ENCODE measurements at regions of chr1 and their contacts with region 1.

Region 1: GRCh38 chr1:156728597-156729462 is at the start of gene ISG20L2:
- DNase-seq: peak; percentile 91 to 93
- H3K4me3 ChIP-seq: peak within 1 kb of the TSS; percentile 83 to 100 (median 94)
- H3K27ac ChIP-seq: peak within 1 kb of the TSS; percentile 89
- H3K4me1 ChIP-seq: peaks cover 0 to 23% (median 18%) of the 10 kb centered on the region in 4 experiments; a peak in 6 of 7 replicates
- H3K27me3 ChIP-seq: no peaks in the 10 kb centered on the region
- CTCF ChIP-seq: no peak
- EP300 ChIP-seq: no peak
- POLR2A ChIP-seq: peak; percentile 91 to 92
- RAD21 ChIP-seq: no peak
- total RNA-seq, gene ISG20L2: 47.5 and 53.1 TPM in 2 replicates

Region 2: DNA sequence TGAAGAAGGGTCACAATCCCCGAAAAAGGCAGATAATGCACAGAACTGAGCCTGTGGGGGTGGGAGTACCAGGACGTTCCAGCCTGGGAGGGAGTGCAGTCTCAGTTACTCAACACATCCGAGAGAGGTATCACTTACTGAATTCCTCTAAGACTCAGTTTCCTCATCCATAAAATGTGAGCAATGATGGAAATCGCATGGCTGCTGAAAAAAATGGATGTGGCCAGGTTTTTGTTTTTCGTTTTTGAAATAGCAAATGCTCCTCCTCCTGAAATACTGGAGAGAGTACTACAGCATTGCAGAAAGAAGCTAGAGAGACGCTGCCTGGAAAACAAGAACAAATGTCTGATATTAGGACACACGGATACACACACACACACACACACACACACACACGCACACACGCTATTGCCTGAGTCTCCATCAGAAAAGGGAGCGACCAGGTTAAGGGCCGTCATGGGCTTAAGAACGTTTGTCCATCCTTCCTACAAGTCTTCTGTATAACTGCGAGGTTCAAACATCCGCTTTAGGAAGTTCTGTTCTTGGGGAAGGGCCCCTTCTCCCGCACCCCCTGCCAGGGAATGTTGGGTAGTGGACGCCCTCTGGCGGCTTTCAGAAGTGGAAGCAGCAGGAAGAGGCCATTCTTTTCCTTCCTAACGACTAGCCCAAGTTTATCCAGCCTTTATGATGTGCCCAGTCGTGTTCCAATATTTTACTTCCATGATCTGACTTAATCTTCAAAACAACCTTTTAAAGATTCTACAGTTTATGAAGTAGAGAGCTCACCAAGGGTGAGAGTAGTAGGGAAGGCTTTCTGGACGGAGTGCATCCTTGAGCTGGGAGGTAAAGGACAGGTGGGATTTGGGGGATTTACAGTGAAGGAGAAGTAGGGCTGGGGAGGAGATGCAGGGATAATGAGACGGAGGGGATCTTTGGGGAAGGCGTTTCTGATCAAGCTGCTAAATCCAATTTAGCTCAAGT is 50.9 kb before region 1 on chr1:
- CTCF ChIA-PET with region 1: interaction called, 4,284 read pairs
- POLR2A ChIA-PET with region 1: interaction called, 57 read pairs
- DNase-seq: peak in 1 of 2 experiments; percentile 74
- H3K4me3 ChIP-seq: peak overlapping the region; percentile 64 to 84 (median 74); a peak in 5 of 8 replicates
- H3K27ac ChIP-seq: no peak overlapping the region
- H3K4me1 ChIP-seq: peaks cover 7 to 37% (median 30%) of the 10 kb centered on the region in 4 experiments
- H3K27me3 ChIP-seq: no peaks in the 10 kb centered on the region; a peak in 2 of 7 replicates
- CTCF ChIP-seq: peak in 2 of 3 experiments; percentile 92 to 97; a peak in 3 of 4 replicates
- EP300 ChIP-seq: no peak
- POLR2A ChIP-seq: no peak
- RAD21 ChIP-seq: peak; percentile 89 to 95

Region 3: GRCh38 chr1:156740679-156741612 is 12.1 kb after region 1 on chr1 and contains the start of gene MRPL24:
- CTCF ChIA-PET with region 1: interaction called, 76 read pairs
- POLR2A ChIA-PET with region 1: interaction called, 214 read pairs
- DNase-seq: peak; percentile 93 to 99
- H3K4me3 ChIP-seq: peak within 1 kb of the TSS; percentile 55 to 95 (median 84)
- H3K27ac ChIP-seq: peak within 1 kb of the TSS; percentile 72
- H3K4me1 ChIP-seq: peaks cover 3 to 16% (median 7%) of the 10 kb centered on the region in 4 experiments; a peak in 6 of 7 replicates
- H3K27me3 ChIP-seq: no peaks in the 10 kb centered on the region
- CTCF ChIP-seq: peak in 1 of 3 experiments; percentile 12; a peak in 1 of 4 replicates
- EP300 ChIP-seq: no peak
- POLR2A ChIP-seq: peak; percentile 58 to 88
- RAD21 ChIP-seq: 0 out of 4 replicates have a peak, but pooled peaks of 1 of the 2 experiments have one; percentile 19
- total RNA-seq, gene MRPL24: 34.4 and 35.2 TPM in 2 replicates

Region 4: DNA sequence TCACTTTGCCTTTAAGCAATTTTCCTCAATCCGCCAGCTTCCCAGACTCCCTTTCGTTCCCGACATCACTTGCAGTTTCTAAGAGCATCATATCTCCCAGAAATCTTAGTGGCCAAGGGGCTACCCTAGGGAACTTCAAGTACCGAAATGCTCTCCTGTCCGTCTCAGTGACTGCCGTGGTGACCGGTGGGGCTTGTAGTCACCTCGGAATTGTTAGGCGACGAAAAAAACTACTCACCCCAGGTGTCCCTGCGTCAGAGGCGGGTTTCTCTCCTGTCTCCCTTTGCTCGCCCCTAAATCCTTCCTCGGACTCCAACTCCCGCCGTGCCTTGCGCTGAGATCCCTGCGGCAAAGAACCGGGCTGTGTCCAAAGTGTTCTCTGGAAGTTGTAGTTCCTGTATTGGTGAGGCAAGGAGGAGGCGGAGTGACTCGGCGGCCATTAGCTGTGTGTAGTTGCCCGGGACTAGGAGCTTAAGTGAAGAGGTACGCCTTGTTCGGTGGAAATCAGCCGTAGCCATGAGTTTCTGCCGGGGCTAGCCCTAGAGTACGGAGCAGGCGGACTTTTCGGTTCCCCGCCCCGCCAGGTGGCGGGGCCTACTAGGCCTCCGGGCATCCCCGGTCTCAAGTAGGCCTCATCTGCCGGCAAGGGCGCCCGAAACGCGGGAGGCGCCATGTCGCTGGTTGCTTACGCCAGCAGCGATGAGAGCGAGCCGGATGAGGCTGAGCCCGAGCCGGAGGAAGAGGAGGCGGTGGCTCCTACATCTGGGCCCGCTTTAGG is 38.5 kb after region 1 on chr1 and contains the start of gene PRCC:
- CTCF ChIA-PET with region 1: interaction called, 100 read pairs
- POLR2A ChIA-PET with region 1: interaction called, 69 read pairs
- DNase-seq: peak; percentile 94 to 98
- H3K4me3 ChIP-seq: peak within 1 kb of the TSS; percentile 67 to 97 (median 86)
- H3K27ac ChIP-seq: peak within 1 kb of the TSS; percentile 86
- H3K4me1 ChIP-seq: peaks cover 0 to 16% (median 6%) of the 10 kb centered on the region in 4 experiments; a peak in 5 of 7 replicates
- H3K27me3 ChIP-seq: no peaks in the 10 kb centered on the region
- CTCF ChIP-seq: 0 out of 4 replicates have a peak, but pooled peaks of 1 of the 3 experiments have one; percentile 1
- EP300 ChIP-seq: no peak
- POLR2A ChIP-seq: peak in 1 of 2 experiments; percentile 74; a peak in 2 of 3 replicates
- RAD21 ChIP-seq: no peak
- total RNA-seq, gene PRCC: 102 and 115 TPM in 2 replicates

Region 5: GRCh38 chr1:156838981-156839410 is 110.2 kb after region 1 on chr1:
- CTCF ChIA-PET with region 1: interaction called, 11 read pairs
- POLR2A ChIA-PET with region 1: no interaction called
- DNase-seq: peak in 1 of 2 experiments; percentile 86
- H3K4me3 ChIP-seq: no peak overlapping the region
- H3K27ac ChIP-seq: no peak overlapping the region
- H3K4me1 ChIP-seq: peaks cover 0 to 2% (median 2%) of the 10 kb centered on the region in 4 experiments; a peak in 3 of 7 replicates
- H3K27me3 ChIP-seq: peaks cover 9 to 23% (median 22%) of the 10 kb centered on the region in 4 experiments
- CTCF ChIP-seq: peak; percentile 92 to 94 (median 93)
- EP300 ChIP-seq: no peak
- POLR2A ChIP-seq: no peak
- RAD21 ChIP-seq: peak; percentile 90 to 94

Region 6: DNA sequence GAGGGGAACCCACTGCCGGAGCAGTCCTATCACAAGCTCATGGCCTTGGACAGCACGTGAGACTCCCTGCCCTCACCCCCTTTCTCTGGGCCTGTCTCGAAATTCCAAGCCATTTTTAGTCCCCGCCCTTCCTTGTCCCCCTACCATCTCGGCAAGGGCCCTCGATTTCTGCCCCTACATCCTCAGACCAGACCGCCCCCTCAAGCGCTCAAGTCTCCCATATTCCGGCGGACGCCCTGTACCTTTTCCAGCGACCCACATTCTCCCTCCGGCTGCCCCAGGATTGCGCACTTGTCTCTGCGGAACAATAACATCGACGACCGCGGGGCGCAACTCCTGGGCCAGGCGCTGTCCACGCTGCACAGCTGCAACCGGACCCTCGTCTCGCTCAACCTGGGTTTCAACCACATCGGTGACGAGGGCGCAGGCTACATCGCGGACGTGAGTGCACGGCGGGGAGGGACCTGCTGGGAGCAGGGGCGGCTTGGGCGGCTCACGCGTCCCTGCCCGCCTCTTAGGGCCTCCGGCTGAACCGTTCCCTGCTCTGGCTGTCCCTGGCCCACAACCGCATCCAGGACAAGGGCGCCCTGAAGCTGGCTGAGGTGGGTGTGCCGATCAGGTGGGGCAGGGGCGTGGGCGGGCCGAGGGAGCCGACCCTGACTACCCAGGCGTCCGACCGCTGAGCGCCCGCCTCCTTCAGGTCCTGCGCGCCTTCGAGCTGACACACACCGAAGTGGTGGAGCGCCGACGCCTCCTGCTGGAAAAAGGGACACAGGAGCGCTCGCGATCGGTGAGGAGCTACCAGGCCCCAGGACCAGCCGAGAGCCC is 198.6 kb after region 1 on chr1:
- CTCF ChIA-PET with region 1: interaction called, 16 read pairs
- POLR2A ChIA-PET with region 1: interaction called, 3 read pairs
- DNase-seq: peak in 1 of 2 experiments; percentile 90
- H3K4me3 ChIP-seq: peak overlapping the region; percentile 36 to 70 (median 62)
- H3K27ac ChIP-seq: no peak overlapping the region
- H3K4me1 ChIP-seq: peaks cover 3 to 21% (median 9%) of the 10 kb centered on the region in 4 experiments; a peak in 6 of 7 replicates
- H3K27me3 ChIP-seq: peaks cover 51 to 71% (median 69%) of the 10 kb centered on the region in 4 experiments
- CTCF ChIP-seq: peak; percentile 90 to 92 (median 92)
- EP300 ChIP-seq: no peak
- POLR2A ChIP-seq: no peak
- RAD21 ChIP-seq: peak; percentile 88 to 93